CD4-positive, alpha-beta T cell (primary cell): ENCODE measurements at regions of chr9 and their contacts with region 1.

Region 1: DNA sequence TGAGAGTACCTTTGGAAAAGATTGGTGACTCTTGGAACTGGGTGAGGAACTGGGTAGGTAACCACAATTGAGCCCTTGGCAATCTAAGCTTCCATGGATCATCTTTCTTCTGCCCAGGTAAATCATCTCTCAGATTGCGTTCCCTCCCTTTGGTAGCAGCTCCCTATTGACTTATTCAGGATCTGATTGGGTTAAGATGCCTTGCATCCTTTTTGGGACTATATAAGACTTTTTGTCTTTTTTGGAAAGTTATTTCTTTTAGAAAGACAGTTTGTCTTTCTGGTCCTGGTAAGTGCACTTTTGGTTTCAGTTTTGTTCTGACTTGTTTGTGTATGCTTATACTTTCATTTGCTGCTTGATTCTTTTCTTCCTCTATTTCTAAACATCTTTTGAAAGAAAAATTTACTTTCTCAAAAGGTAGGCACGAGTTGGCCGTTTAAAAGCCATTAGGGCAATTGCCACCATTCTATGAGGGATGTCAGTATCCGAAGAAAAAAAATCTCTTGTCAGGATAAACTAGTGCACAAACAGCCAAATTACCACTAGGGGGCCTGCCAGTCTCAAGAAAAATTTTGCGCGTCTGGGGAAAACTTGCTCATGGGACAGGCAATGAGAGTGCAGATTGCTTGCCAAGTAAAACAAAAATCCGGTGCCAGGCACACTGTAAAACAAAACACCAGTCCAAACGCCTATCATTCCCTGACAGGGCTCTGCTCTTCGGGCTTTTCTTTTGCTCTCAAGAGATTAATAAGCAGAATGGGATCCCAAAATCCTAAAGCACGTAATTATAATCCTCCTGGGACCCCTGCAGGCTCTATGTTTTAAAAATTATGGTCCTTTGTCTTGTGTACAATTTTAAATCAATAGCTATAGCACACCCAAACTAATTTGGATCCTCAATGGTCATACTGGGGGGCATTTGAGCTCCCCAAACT is 12.8 kb downstream of the OR1J1 start:
- DNase-seq: peak; percentile 41 to 79 (median 52)
- ATAC-seq: peak; percentile 77
- H3K4me3 ChIP-seq: peak overlapping the region; percentile 56
- H3K4me3 Mint-ChIP-seq: peak overlapping the region; percentile 92
- H3K27ac ChIP-seq: peak overlapping the region in 1 of 2 donors; percentile 42
- H3K27ac Mint-ChIP-seq: peak overlapping the region; percentile 78
- H3K4me1 ChIP-seq: peaks cover 7% of the 10 kb centered on the region
- H3K4me1 Mint-ChIP-seq: peaks cover 17% of the 10 kb centered on the region
- H3K27me3 ChIP-seq: peaks cover 6 to 7% of the 10 kb centered on the region in 2 experiments
- H3K27me3 Mint-ChIP-seq: peaks cover 53% of the 10 kb centered on the region
- CTCF ChIP-seq: peak; percentile 87

Region 2: DNA sequence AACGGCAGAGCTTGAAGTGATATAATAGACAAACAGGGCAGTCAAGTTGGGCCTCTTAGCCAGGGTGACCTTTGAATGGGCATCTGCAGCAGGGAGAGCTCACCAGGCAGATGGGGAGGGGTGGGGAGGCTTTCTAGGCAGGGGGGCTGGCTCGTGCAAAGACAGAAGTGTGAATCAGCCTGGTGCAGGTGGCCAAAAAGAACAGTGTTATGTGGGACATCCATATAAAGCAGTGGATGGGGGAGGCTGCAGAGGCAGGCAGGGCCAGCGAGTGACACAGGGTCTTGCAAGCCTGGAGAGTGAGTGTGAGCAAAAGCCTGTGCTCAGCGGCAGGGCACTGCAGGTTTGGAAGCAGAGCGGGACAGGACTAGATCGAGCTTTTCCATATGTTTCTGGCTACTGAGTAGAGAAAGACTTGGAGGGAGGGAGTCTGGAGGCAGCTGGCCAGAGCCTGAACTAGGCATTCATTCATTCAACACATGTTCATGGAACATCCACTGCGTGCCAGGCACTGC is 357.6 kb before region 1 on chr9:
- CTCF ChIA-PET with region 1: no interaction called
- POLR2A ChIA-PET with region 1: no interaction called
- intact Hi-C with region 1: loop called in 1 of 2 experiments (anchors 10 kb)
- DNase-seq: no peak
- ATAC-seq: no peak
- H3K4me3 ChIP-seq: no peak overlapping the region
- H3K4me3 Mint-ChIP-seq: no peak overlapping the region
- H3K27ac ChIP-seq: no peak overlapping the region
- H3K27ac Mint-ChIP-seq: no peak overlapping the region
- H3K4me1 ChIP-seq: no peaks in the 10 kb centered on the region
- H3K4me1 Mint-ChIP-seq: no peaks in the 10 kb centered on the region
- H3K27me3 ChIP-seq: no peaks in the 10 kb centered on the region
- H3K27me3 Mint-ChIP-seq: no peaks in the 10 kb centered on the region
- CTCF ChIP-seq: no peak